Mammary epithelial cell (primary cell): ENCODE measurements at regions of chr10 and their contacts with region 1.

Region 1: GRCh38 chr10:121418126-121418777 is 180.0 kb downstream of the FGFR2 start:
- DNase-seq: peak; percentile 80
- H3K4me3 ChIP-seq: no peak overlapping the region
- H3K27ac ChIP-seq: no peak overlapping the region
- H3K4me1 ChIP-seq: peaks cover 15% of the 10 kb centered on the region
- H3K27me3 ChIP-seq: no peaks in the 10 kb centered on the region
- CTCF ChIP-seq: peak in 1 of 2 donors; percentile 12

Region 2: GRCh38 chr10:121332829-121333633 is 85.2 kb before region 1 on chr10:
- CTCF ChIA-PET with region 1: no interaction called
- dilution Hi-C with region 1: no loop called
- in situ Hi-C with region 1: no loop called
- intact Hi-C with region 1: loop called (anchors 5 kb)
- DNase-seq: peak; percentile 84
- H3K4me3 ChIP-seq: no peak overlapping the region
- H3K27ac ChIP-seq: peak overlapping the region; percentile 48
- H3K4me1 ChIP-seq: peaks cover 21% of the 10 kb centered on the region
- H3K27me3 ChIP-seq: no peaks in the 10 kb centered on the region
- CTCF ChIP-seq: no peak